H1 (cell line): ENCODE measurements at regions of chr4 and their contacts with region 1.

Region 1: GRCh38 chr4:109702950-109703663 is at the start of gene CASP6:
- DNase-seq: peak; percentile 49 to 90
- H3K4me3 ChIP-seq: peak within 1 kb of the TSS; percentile 68 to 85 (median 76)
- H3K27ac ChIP-seq: peak within 1 kb of the TSS; percentile 64
- H3K4me1 ChIP-seq: peaks cover 0 to 6% (median 4%) of the 10 kb centered on the region in 4 experiments
- H3K27me3 ChIP-seq: no peaks in the 10 kb centered on the region
- CTCF ChIP-seq: peak; percentile 59 to 72 (median 70)
- EP300 ChIP-seq: no peak
- POLR2A ChIP-seq: peak in 1 of 2 experiments; percentile 91; a peak in 2 of 3 replicates
- RAD21 ChIP-seq: peak; percentile 36 to 58; a peak in 3 of 4 replicates
- total RNA-seq, gene CASP6: 29.5 and 36.4 TPM in 2 replicates

Region 2: GRCh38 chr4:109302361-109303139 is 400.6 kb before region 1 on chr4 and contains the start of gene COL25A1:
- CTCF ChIA-PET with region 1: no interaction called
- POLR2A ChIA-PET with region 1: no interaction called
- DNase-seq: peak; percentile 88 to 90
- H3K4me3 ChIP-seq: peak within 1 kb of the TSS; percentile 36 to 75 (median 54)
- H3K27ac ChIP-seq: no peak within 1 kb of the TSS
- H3K4me1 ChIP-seq: peaks cover 0 to 14% (median 2%) of the 10 kb centered on the region in 4 experiments; a peak in 5 of 7 replicates
- H3K27me3 ChIP-seq: peaks cover 11 to 22% (median 16%) of the 10 kb centered on the region in 4 experiments
- CTCF ChIP-seq: no peak
- EP300 ChIP-seq: peak in 1 of 2 experiments; percentile 20; a peak in 1 of 3 replicates
- POLR2A ChIP-seq: peak; percentile 67 to 82; a peak in 2 of 3 replicates
- RAD21 ChIP-seq: no peak
- total RNA-seq, gene COL25A1: 4.5 and 8.3 TPM in 2 replicates

Region 3: DNA sequence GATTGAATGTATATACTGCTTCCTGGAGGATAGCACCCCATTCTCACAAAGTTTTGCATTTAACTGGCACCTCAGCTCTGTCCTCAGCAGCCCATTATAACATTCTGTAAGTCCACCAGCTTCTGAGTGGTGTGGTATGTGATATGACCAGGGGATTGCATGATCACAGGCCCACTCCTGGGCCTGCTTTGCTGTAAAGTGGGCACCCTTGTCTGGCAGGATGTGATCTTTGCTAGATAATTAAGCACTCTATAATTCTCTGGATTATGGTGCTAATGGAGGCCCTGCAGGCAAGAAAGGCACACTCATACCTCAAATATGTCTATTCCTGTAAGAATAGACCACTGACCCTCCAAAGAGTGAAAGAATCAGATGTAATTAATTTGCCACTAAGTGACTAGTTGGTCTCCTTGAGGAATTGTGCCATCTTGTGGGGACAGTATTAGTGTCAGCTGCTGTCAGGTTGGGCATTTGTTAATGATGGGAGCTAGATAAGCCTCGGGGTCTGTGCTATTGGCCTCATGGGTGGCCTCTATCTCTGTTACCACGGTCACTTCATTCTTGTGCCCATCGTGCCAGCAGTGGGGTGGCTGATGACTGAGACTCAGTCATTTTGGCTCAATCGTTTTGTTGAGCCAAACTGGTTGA is 100.9 kb after region 1 on chr4:
- CTCF ChIA-PET with region 1: interaction called, 10 read pairs
- POLR2A ChIA-PET with region 1: interaction called, 4 read pairs
- DNase-seq: no peak
- H3K4me3 ChIP-seq: no peak overlapping the region
- H3K27ac ChIP-seq: no peak overlapping the region
- H3K4me1 ChIP-seq: no peaks in the 10 kb centered on the region
- H3K27me3 ChIP-seq: no peaks in the 10 kb centered on the region
- CTCF ChIP-seq: peak; percentile 21 to 76 (median 51); a peak in 3 of 4 replicates
- EP300 ChIP-seq: no peak
- POLR2A ChIP-seq: no peak
- RAD21 ChIP-seq: peak; percentile 83 to 87

Region 4: DNA sequence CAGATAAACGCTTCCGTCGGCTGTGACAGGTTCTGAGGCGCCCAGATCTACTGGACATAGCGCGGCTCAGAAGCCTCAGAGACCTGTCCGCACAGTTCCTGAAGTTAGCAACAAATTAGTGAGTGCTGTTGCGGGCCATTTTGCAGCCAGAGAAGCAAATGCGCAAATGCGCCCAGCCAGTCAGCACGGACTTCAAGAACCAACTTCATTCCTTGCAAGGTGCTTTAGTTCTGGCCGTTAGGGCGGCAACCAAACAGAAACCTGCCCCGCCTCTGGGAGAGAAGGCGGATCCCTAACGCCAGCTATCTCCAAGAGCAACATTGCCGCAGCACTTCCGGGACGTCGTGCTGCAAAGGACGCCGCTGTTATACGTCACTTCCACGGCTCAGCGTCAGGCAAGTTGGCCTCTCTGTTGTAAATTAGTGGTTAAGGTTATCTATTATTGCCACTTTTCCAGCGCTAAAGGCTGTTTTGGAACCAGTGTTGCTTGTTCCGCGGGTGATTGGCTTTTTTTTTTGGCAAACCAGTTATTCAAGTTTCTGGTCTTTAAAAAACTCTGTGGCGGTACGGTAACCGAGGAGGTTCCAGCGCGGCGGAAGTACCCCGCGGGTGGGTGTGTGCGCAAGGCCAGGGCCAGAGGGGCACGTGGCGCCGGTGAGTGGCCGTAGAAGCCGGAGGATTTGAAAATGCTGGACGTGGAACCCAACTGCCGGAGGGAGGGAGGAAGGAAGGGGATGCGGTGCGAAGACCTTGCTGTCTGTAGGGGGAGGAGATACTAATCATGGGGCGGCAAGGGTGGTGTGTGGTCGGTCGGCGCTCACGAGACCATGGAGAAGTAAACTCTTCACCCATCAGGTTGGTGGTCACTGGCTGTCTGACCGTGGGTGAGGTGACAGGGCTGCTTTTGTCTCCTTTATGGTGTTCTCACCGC is 112.3 kb after region 1 on chr4 and contains the start of gene GAR1:
- CTCF ChIA-PET with region 1: interaction called, 6 read pairs
- POLR2A ChIA-PET with region 1: interaction called, 10 read pairs
- DNase-seq: peak; percentile 87 to 91
- H3K4me3 ChIP-seq: peak within 1 kb of the TSS; percentile 82 to 98 (median 90)
- H3K27ac ChIP-seq: peak within 1 kb of the TSS; percentile 92
- H3K4me1 ChIP-seq: peaks cover 0 to 7% (median 4%) of the 10 kb centered on the region in 4 experiments; a peak in 4 of 7 replicates
- H3K27me3 ChIP-seq: no peaks in the 10 kb centered on the region
- CTCF ChIP-seq: no peak
- EP300 ChIP-seq: no peak
- POLR2A ChIP-seq: peak in 1 of 2 experiments; percentile 41; a peak in 2 of 3 replicates
- RAD21 ChIP-seq: no peak
- total RNA-seq, gene GAR1: 37.5 and 37.9 TPM in 2 replicates